ENCODE measurements at regions of chr3 and their contacts with region 1.

Region 1: DNA sequence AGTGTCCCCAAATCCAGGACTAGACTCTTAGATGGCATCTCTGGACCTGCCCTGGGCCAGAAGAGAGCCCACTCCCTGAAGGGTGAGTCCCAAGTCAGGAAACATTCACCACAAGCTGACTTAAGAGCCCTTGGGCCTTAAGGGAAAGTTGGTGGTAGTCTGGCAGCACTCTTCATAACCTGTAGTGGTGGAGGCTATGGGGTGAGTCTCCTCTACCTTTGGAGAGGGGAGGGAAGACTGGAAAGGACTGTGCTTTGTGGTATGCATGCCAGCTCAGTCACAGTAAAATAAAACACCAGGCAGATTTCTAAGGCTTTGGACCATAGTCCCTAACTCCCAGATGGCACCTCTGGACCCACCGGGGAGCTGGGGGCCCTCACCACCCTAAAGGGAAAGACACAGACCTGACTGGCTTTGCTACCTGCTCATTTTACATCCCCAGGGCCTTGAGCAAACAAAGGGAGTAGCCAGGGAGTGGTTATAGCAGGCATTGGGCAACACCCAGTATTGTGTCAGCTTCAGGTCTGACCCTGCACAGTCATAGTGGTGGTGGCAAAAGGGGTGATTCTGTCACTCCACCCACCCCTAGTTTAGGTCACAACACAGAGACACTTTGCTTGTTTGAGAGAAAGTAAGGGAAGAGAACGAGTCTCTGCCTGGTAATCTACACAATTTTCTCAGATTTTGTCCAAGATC is 352.3 kb downstream of the DIPK2A start:
- DNase-seq: no peak
- ATAC-seq: no peak
- H3K4me3 ChIP-seq: no peak overlapping the region
- H3K27ac ChIP-seq: no peak overlapping the region
- H3K4me1 ChIP-seq: no peaks in the 10 kb centered on the region
- H3K27me3 ChIP-seq: no peaks in the 10 kb centered on the region
- CTCF ChIP-seq: no peak
- EP300 ChIP-seq: no peak
- POLR2A ChIP-seq: no peak
- RAD21 ChIP-seq: no peak

Region 2: GRCh38 chr3:144429719-144430121 is 105.8 kb after region 1 on chr3:
- CTCF ChIA-PET with region 1: no interaction called
- POLR2A ChIA-PET with region 1: no interaction called
- in situ Hi-C with region 1: no loop called
- intact Hi-C with region 1: no loop called
- DNase-seq: no peak
- ATAC-seq: no peak
- H3K4me3 ChIP-seq: no peak overlapping the region
- H3K27ac ChIP-seq: no peak overlapping the region
- H3K4me1 ChIP-seq: no peaks in the 10 kb centered on the region
- H3K27me3 ChIP-seq: no peaks in the 10 kb centered on the region
- CTCF ChIP-seq: no peak
- EP300 ChIP-seq: no peak
- POLR2A ChIP-seq: no peak
- RAD21 ChIP-seq: no peak

Region 3: DNA sequence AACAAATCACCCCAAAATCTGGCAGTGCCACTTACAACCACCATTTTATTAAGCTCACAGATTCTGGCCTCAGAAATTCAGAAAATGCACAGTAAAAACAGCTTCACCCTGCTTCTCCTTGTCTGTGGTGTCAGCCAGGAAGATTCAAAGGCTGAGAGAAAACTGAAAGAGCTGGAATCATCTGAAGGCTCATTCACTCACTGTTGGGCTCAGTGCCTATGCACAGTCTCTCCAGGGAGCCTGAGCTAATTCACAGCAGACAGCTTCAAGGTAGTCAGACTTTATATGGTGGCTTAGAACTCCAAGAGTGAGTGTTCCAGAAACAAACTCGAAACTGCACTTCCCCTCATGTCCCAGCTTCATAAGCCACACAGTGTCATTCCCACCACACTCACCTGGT is 1853.6 kb after region 1 on chr3:
- CTCF ChIA-PET with region 1: no interaction called
- POLR2A ChIA-PET with region 1: no interaction called
- in situ Hi-C with region 1: no loop called
- intact Hi-C with region 1: loop called (anchors 10 kb)
- DNase-seq: no peak
- ATAC-seq: peak; percentile 38; the same call in 2 of the 3 replicates
- H3K4me3 ChIP-seq: no peak overlapping the region
- H3K27ac ChIP-seq: no peak overlapping the region
- H3K4me1 ChIP-seq: 0 out of 2 replicates have a peak, but pooled peaks cover 4% of the 10 kb centered on the region
- H3K27me3 ChIP-seq: no peaks in the 10 kb centered on the region
- CTCF ChIP-seq: no peak
- EP300 ChIP-seq: no peak
- POLR2A ChIP-seq: no peak
- RAD21 ChIP-seq: no peak

Measured in HepG2 (cell line).